ENCODE measurements at regions of chr3 and their contacts with region 1.

Region 1: DNA sequence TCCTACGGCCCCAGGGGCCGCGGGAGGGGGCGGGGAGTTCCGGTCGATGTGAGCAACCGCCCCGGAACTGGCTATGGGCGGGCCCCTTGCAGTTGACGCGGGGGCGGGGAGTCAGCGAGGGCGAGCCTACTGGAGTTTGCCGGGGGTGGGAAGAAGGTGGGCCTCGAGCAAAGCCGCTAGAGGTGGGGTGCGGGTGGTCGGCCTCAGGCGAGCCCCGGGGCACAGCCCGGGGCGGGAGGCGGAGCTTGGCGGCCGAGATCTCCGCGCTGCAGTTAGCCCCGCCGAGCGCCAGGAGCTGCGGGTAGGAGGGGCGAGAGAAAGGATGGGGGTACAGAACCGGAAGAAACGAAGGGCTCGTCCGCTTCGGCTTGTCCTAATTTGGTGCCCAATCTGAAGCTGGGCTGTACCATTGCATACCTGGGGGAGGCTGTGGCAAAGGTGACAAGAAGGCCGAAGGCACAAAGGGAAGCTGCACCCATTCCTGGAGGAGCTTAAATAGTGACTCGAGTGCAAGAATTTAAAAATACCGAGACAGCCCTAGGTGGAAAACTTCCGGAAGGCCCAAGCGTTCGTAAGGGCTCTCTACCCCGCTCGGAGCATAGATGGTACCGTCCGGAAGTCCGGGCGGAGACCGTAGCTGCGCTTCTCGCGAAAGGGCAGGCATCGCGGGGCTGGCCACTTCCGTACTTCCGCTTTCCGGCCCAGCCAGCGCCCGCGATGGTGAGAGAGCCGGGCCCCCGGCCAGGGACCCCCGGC is at the starts of genes ARPC4 and TADA3:
- DNase-seq: peak; percentile 92
- ATAC-seq: peak; percentile 75
- H3K4me3 Mint-ChIP-seq: peak within 1 kb of the TSS; percentile 99
- H3K27ac Mint-ChIP-seq: peak within 1 kb of the TSS; percentile 100
- H3K4me1 Mint-ChIP-seq: peaks cover 67% of the 10 kb centered on the region
- H3K27me3 Mint-ChIP-seq: no peaks in the 10 kb centered on the region
- CTCF ChIP-seq: no peak
- total RNA-seq, gene ARPC4: 315 and 338 TPM in 2 replicates
- total RNA-seq, gene TADA3: 43.8 and 44.7 TPM in 2 replicates

Region 2: DNA sequence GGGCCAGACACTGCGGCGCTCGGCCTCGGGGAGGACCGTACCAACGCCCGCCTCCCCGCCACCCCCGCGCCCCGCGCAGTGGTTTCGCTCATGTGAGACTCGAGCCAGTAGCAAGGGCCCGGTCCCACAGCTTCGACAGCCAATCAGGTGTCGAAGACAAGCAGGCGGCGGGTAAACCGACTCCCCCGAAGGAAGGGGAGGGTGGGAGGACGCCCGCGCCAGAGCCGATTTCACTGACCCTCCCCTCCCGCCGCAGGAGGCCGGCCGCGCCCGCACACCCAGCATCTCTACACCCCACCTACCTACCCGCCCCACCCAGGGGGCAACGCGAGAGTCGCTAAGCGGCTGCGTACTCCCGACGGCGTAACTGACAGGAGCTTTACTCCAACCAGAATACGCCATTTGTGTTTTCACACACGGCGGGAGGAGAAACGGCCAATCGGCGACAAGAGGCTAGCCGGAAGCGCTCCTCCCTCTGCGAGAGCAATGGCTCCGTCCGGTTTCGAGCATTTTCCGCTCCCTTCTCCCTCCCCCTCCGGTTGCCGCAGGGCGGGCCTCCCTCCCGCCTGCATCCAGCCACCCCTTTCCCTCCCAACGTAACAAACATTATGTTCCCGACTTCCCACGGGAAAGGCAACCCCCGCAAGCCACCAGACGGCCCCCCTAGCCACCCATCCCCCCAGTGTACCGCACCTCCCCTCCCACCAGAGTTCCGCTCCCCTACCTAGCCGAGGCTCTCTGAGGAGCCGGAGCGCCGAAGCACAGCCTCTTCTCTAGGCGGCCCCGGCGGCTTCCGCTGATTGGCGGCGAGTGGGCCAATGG is 395.7 kb before region 1 on chr3:
- CTCF ChIA-PET with region 1: no interaction called
- POLR2A ChIA-PET with region 1: interaction called, 17 read pairs
- intact Hi-C with region 1: loop called (anchors 1 kb)
- DNase-seq: peak; percentile 99
- ATAC-seq: peak; percentile 71
- H3K4me3 Mint-ChIP-seq: peak overlapping the region; percentile 98
- H3K27ac Mint-ChIP-seq: peak overlapping the region; percentile 100
- H3K4me1 Mint-ChIP-seq: peaks cover 61% of the 10 kb centered on the region
- H3K27me3 Mint-ChIP-seq: no peaks in the 10 kb centered on the region
- CTCF ChIP-seq: no peak

Region 3: GRCh38 chr3:9749645-9750555 is 42.7 kb before region 1 on chr3 and contains the start of gene OGG1:
- CTCF ChIA-PET with region 1: interaction called, 5 read pairs
- POLR2A ChIA-PET with region 1: interaction called, 106 read pairs
- intact Hi-C with region 1: loop called (anchors 1 kb)
- DNase-seq: peak; percentile 89
- ATAC-seq: peak; percentile 90
- H3K4me3 Mint-ChIP-seq: peak within 1 kb of the TSS; percentile 94
- H3K27ac Mint-ChIP-seq: peak within 1 kb of the TSS; percentile 95
- H3K4me1 Mint-ChIP-seq: peaks cover 48% of the 10 kb centered on the region
- H3K27me3 Mint-ChIP-seq: no peaks in the 10 kb centered on the region
- CTCF ChIP-seq: no peak
- total RNA-seq, gene OGG1: 43.5 and 60.7 TPM in 2 replicates

Region 4: DNA sequence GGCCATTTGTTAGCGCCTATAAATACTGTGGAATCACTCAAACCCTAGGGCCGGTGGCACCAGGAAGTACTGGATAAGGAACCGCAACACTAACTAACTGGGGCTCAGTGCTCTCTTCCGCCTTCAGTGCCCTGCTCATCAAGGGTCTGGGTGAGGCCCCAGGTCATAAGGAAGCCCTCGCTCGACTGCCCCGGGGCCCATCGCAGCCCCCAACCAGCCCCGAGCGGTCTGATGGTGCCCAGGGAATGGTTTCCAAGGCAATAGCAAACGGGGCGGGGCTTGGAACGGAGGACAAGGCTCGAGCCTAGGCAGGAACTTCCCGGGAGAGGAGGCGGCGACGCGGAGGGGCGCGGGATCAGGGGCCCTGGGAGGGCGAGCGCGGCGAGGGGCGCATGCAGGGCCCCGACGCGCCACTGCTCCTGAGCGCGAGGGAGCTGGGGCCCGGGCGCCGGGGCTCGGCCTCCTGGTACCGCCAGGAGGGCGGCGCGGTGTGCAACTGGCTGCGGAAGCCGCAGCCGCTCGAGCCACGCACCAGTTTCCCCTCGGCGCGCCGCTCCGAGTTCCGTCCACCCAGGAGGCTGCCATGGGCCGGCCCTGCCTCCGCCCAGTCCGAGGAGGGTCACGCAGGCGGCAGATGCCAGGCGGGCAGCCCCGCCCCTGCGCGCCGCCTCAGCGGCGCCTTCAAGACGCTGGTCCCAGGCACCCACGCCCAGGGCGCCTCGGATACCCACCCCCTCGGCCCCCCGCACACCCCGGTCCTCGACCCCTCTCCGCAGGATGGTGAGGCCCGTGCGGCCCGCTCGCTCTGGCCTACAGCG is 17.2 kb after region 1 on chr3 and contains the start of gene TTLL3:
- CTCF ChIA-PET with region 1: interaction called, 5 read pairs
- POLR2A ChIA-PET with region 1: interaction called, 146 read pairs
- intact Hi-C with region 1: loop called (anchors 1 kb)
- DNase-seq: peak; percentile 55
- ATAC-seq: peak; percentile 69
- H3K4me3 Mint-ChIP-seq: peak within 1 kb of the TSS; percentile 91
- H3K27ac Mint-ChIP-seq: peak within 1 kb of the TSS; percentile 98
- H3K4me1 Mint-ChIP-seq: peaks cover 33% of the 10 kb centered on the region
- H3K27me3 Mint-ChIP-seq: no peaks in the 10 kb centered on the region
- CTCF ChIP-seq: no peak
- total RNA-seq, gene TTLL3: 51.4 and 61.9 TPM in 2 replicates

Region 5: GRCh38 chr3:9890249-9891071 is 97.9 kb after region 1 on chr3 and contains the start of gene JAGN1:
- CTCF ChIA-PET with region 1: no interaction called
- POLR2A ChIA-PET with region 1: interaction called, 18 read pairs
- intact Hi-C with region 1: loop called (anchors 1 kb)
- DNase-seq: peak; percentile 85
- ATAC-seq: peak; percentile 86
- H3K4me3 Mint-ChIP-seq: peak within 1 kb of the TSS; percentile 94
- H3K27ac Mint-ChIP-seq: peak within 1 kb of the TSS; percentile 97
- H3K4me1 Mint-ChIP-seq: peaks cover 44% of the 10 kb centered on the region
- H3K27me3 Mint-ChIP-seq: no peaks in the 10 kb centered on the region
- CTCF ChIP-seq: no peak
- total RNA-seq, gene JAGN1: 30.9 and 32.1 TPM in 2 replicates

Region 6: GRCh38 chr3:10115326-10116137 is 322.9 kb after region 1 on chr3 and contains the start of gene BRK1:
- CTCF ChIA-PET with region 1: no interaction called
- POLR2A ChIA-PET with region 1: no interaction called
- intact Hi-C with region 1: loop called (anchors 5 kb)
- DNase-seq: peak; percentile 85
- ATAC-seq: peak; percentile 96
- H3K4me3 Mint-ChIP-seq: peak within 1 kb of the TSS; percentile 100
- H3K27ac Mint-ChIP-seq: peak within 1 kb of the TSS; percentile 99
- H3K4me1 Mint-ChIP-seq: peaks cover 40% of the 10 kb centered on the region
- H3K27me3 Mint-ChIP-seq: no peaks in the 10 kb centered on the region
- CTCF ChIP-seq: no peak
- total RNA-seq, gene BRK1: 123 and 141 TPM in 2 replicates

Region 7: DNA sequence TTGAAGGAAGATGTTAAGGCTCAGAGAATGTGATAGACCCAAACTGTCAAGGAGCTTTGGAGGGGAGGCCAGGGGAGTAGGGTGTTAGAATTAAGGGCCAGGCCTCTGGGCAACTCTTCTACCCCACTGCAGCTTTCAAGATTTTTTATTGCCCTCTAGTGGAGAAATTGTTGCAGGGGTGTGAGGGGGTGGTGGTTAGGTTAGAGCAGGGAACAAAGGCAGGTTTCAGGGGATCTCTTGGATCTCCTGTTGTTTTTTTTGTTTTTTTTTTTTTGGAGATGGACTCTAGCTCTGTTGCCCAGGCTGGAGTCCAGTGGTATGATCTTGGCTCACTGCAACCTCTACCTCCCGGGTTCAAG is 529.7 kb after region 1 on chr3:
- CTCF ChIA-PET with region 1: no interaction called
- POLR2A ChIA-PET with region 1: interaction called, 3 read pairs
- intact Hi-C with region 1: loop called (anchors 10 kb)
- DNase-seq: no peak
- ATAC-seq: no peak
- H3K4me3 Mint-ChIP-seq: no peak overlapping the region
- H3K27ac Mint-ChIP-seq: no peak overlapping the region
- H3K4me1 Mint-ChIP-seq: peaks cover 31% of the 10 kb centered on the region
- H3K27me3 Mint-ChIP-seq: peaks cover 9% of the 10 kb centered on the region
- CTCF ChIP-seq: no peak

Region 8: DNA sequence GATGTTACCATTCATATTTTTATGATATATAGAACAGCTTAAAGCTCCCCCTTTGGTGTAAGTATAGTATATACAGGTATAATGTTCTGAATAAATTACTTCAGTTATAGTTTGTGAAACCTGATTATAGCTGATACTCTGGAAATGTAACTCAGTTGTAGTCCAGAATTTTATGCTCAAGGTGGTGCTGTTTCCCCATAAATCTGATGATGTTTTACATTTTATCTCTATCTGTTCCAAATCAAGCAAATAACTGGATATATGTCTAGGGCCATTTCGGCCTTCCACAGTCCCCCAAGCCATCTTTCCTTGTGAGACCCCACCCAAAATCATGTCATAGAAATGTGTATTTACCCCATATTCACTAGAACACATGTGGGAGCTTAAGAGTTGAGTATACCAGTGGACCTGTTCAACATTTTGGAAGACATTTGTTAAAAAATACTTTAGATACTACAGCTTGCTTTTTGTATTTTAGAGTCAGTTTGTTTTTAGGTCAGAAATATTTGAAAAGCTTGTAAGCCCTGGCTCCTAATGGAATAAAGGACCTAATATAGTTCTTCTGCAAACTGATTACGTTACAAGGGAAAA is 1586.7 kb after region 1 on chr3:
- CTCF ChIA-PET with region 1: no interaction called
- POLR2A ChIA-PET with region 1: no interaction called
- intact Hi-C with region 1: no loop called
- DNase-seq: no peak
- ATAC-seq: peak; percentile 21
- H3K4me3 Mint-ChIP-seq: no peak overlapping the region
- H3K27ac Mint-ChIP-seq: no peak overlapping the region
- H3K4me1 Mint-ChIP-seq: no peaks in the 10 kb centered on the region
- H3K27me3 Mint-ChIP-seq: no peaks in the 10 kb centered on the region
- CTCF ChIP-seq: no peak